ENCODE measurements at regions of chr2 and their contacts with region 1.

Region 1: DNA sequence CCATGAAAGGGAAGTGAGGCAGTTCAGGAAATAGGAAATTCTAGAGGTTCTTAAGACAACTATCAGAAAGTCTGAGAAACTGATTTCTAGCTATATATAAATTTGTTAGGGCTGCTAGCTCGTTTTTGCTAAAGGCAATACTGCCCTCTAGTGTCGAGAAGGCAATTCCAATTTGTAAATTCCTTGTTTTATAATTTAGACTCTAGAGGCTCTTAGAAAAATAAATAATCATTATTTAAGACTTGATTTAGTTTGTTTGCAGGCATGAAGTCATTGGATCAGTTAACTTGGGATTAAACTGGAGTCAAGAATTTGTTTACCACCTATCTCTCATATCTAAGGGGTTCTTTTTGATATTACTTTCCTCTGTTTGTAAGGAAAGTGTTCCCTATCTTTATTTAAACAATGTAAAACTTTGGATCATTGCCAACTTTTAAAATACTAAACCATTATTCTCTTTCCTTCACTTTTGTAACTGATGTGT is 66.2 kb downstream of the ACVR2A start:
- DNase-seq: peak; percentile 46
- H3K4me3 ChIP-seq: no peak overlapping the region
- H3K27ac ChIP-seq: no peak overlapping the region
- H3K27me3 ChIP-seq: no peaks in the 10 kb centered on the region
- CTCF ChIP-seq: peak; percentile 70

Region 2: GRCh38 chr2:146214394-146214929 is 1696.6 kb before region 1 on chr2:
- CTCF ChIA-PET with region 1: no interaction called
- POLR2A ChIA-PET with region 1: no interaction called
- DNase-seq: no peak
- H3K4me3 ChIP-seq: no peak overlapping the region
- H3K27ac ChIP-seq: no peak overlapping the region
- H3K27me3 ChIP-seq: no peaks in the 10 kb centered on the region
- CTCF ChIP-seq: no peak

Region 3: DNA sequence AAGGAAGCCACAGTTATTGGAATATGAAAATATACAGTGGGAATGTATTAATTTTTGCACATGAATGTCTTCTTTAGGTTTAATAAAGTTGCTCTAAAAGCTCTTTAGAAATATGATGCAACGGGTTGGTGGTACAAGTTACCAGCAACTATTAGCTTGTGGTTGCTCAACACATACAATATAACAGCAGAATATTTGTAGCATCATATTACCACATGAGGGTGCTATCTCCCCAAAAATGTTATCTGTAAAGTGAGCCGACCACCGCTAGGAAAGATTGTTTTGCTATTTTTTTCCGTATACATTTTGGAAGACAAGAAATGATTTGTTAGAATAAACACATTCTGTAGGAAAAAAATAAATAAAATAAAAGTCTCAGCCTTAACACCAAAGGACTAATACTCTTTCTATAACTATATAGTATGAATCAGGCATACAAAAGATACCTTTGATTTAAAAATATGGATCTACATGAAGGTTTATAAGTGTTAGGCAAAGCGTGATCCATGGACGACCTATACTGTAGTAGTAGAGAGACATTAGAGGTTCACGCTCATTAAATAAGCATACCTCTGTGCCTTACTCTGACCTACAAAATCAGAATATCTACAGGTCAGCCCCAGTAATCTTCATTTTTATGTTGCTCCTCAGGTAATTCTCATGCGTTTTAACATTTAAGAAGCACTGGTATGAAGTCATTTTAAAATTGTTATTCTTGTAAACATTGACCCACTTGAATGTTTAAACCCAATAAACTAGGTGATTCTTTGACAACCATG is 1176.8 kb before region 1 on chr2:
- CTCF ChIA-PET with region 1: interaction called, 28 read pairs
- POLR2A ChIA-PET with region 1: no interaction called
- DNase-seq: peak; percentile 6
- H3K4me3 ChIP-seq: no peak overlapping the region
- H3K27ac ChIP-seq: no peak overlapping the region
- H3K27me3 ChIP-seq: no peaks in the 10 kb centered on the region
- CTCF ChIP-seq: peak; percentile 53

Region 4: DNA sequence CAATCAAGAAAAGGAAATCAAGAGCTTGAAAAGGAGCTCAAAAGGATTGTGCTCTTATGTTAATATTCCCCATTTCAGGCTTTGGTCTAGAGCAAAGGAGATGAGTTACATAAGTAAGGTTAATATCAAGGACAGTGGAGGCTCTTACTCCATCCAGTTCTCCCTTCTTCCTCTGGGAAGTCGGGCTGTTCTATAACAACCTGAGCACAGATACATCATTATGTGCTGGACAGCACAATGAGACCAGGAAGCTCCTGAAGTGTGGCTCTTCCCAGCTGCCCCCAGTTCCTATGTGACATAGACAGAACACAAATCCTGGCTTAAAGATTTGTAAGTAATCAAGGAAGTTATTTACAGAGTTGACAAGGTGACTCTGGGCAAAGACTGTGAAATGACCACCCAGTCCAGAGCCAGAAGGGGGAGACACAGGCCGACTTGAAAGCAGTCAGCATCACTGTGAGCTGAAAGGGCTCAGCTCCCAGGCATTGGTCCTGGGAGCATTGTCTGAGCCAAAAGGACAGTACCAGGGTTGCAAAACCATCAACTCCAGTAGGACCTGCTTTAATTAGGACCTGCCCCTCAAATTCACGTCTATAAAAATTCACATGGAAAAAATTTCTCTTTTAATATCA is 983.8 kb before region 1 on chr2:
- CTCF ChIA-PET with region 1: interaction called, 20 read pairs
- POLR2A ChIA-PET with region 1: no interaction called
- DNase-seq: no peak
- H3K4me3 ChIP-seq: no peak overlapping the region
- H3K27ac ChIP-seq: no peak overlapping the region
- H3K27me3 ChIP-seq: no peaks in the 10 kb centered on the region
- CTCF ChIP-seq: peak; percentile 56

Region 5: DNA sequence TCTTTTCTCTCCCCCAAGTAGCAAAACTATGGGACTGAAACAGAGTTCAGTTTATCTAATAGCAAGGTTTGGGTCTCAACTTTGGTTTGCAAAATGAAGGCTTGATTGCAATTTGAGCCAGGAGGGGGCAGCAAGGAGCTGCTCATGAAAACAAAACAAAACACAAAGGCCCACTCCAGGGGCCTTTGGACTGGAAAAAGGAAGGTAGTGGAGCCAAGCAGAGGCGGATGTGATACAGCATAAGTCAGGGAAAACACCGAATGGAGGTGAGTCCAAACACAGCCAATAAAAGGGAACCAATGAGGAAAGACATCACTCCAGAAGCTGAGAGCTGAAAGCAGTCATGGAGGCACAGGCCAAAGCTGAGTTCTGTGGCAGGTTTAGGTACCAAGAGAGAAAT is 865.9 kb before region 1 on chr2:
- CTCF ChIA-PET with region 1: interaction called, 71 read pairs
- POLR2A ChIA-PET with region 1: no interaction called
- DNase-seq: no peak
- H3K4me3 ChIP-seq: no peak overlapping the region
- H3K27ac ChIP-seq: no peak overlapping the region
- H3K27me3 ChIP-seq: no peaks in the 10 kb centered on the region
- CTCF ChIP-seq: peak; percentile 69

Region 6: GRCh38 chr2:147082850-147083522 is 828.0 kb before region 1 on chr2:
- CTCF ChIA-PET with region 1: interaction called, 50 read pairs
- POLR2A ChIA-PET with region 1: interaction called, 5 read pairs
- DNase-seq: peak; percentile 32
- H3K4me3 ChIP-seq: no peak overlapping the region
- H3K27ac ChIP-seq: no peak overlapping the region
- H3K27me3 ChIP-seq: no peaks in the 10 kb centered on the region
- CTCF ChIP-seq: peak; percentile 90

Region 7: GRCh38 chr2:147884830-147885229 is 26.2 kb before region 1 on chr2:
- CTCF ChIA-PET with region 1: interaction called, 13 read pairs
- POLR2A ChIA-PET with region 1: no interaction called
- DNase-seq: no peak
- H3K4me3 ChIP-seq: no peak overlapping the region
- H3K27ac ChIP-seq: no peak overlapping the region
- H3K27me3 ChIP-seq: no peaks in the 10 kb centered on the region
- CTCF ChIP-seq: no peak